ENCODE measurements at regions of chr11 and their contacts with region 1.

Region 1: DNA sequence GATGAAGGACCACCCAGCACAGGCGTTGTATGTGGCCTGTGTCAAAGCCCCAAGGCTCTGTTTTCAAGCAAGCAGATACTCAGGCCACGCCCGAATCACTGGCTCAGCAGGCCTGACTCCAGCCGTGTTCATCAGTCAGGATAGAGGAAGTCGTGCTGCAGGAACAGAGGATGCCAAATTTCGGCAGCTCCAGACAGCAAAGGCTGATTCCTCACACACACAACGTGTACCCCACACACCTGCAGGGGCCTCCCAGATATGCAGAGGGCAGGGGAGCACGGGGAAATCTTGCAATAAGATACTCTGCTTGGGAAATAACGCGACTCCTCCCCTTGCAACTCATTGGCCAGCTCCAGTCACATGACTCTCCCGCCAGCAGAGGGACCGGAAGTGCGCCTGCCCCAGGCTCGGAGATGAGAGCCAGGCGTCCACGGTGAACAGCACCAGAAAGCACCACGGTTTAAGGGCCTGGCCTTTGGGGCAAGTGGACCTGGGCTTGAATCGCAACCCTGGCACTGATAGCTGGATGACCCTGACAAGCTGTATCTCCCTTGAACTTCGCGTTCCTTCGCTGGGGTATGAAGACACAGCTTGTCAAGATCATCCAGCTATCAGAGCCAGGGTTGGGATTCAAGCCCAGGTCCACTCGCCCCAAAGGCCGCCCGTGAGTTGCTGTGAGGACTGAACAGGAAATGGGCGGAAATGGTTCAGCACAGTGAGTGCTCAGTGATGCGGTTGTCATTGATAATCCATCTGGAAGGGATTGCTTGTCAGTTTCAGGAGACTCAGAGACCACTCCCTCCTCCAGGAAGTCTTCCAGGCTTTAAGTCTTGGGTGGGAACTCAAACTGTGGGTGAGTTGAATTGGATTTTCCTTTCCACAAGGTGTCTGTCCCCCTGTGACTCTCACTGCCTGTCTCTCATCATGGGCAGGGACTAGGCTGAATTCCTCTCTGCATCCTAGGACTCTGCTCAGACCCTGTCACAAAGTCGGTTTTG is 88.5 kb downstream of the MYEOV start:
- DNase-seq: peak; percentile 82 to 88
- H3K4me3 ChIP-seq: peak overlapping the region; percentile 43; the same call in 1 of the 2 replicates
- H3K27ac ChIP-seq: peak overlapping the region; percentile 59
- H3K4me1 ChIP-seq: peaks cover 30% of the 10 kb centered on the region
- H3K27me3 ChIP-seq: no peaks in the 10 kb centered on the region
- CTCF ChIP-seq: no peak

Region 2: GRCh38 chr11:69419662-69420395 is 37.4 kb after region 1 on chr11:
- CTCF ChIA-PET with region 1: no interaction called
- POLR2A ChIA-PET with region 1: no interaction called
- intact Hi-C with region 1: loop called (anchors 1 kb)
- DNase-seq: no peak
- H3K4me3 ChIP-seq: no peak overlapping the region; the same call in 1 of the 2 replicates
- H3K27ac ChIP-seq: peak overlapping the region; percentile 89
- H3K4me1 ChIP-seq: peaks cover 28% of the 10 kb centered on the region
- H3K27me3 ChIP-seq: no peaks in the 10 kb centered on the region
- CTCF ChIP-seq: no peak